ENCODE measurements at regions of chr13 and their contacts with region 1.

Region 1: GRCh38 chr13:28819735-28820098 is 422 bp upstream of the MTUS2 start:
- DNase-seq: no peak
- H3K4me3 ChIP-seq: peak overlapping the region; percentile 57 to 70 (median 62)
- H3K27ac ChIP-seq: peak overlapping the region in 2 of 4 donors; percentile 34 to 51
- H3K4me1 ChIP-seq: peaks cover 5 to 20% (median 17%) of the 10 kb centered on the region in 4 donors
- H3K27me3 ChIP-seq: peaks cover 0 to 46% (median 0%) of the 10 kb centered on the region in 4 donors
- CTCF ChIP-seq: peak; percentile 28 to 57 (median 56)
- EP300 ChIP-seq: no peak
- POLR2A ChIP-seq: no peak

Region 2: GRCh38 chr13:29000826-29001225 is 181.1 kb after region 1 on chr13:
- intact Hi-C with region 1: no loop called
- DNase-seq: no peak
- H3K4me3 ChIP-seq: no peak overlapping the region
- H3K27ac ChIP-seq: no peak overlapping the region
- H3K4me1 ChIP-seq: peaks cover 0 to under 1% (median 0%) of the 10 kb centered on the region in 4 donors
- H3K27me3 ChIP-seq: no peaks in the 10 kb centered on the region
- CTCF ChIP-seq: no peak
- EP300 ChIP-seq: no peak
- POLR2A ChIP-seq: no peak

Region 3: DNA sequence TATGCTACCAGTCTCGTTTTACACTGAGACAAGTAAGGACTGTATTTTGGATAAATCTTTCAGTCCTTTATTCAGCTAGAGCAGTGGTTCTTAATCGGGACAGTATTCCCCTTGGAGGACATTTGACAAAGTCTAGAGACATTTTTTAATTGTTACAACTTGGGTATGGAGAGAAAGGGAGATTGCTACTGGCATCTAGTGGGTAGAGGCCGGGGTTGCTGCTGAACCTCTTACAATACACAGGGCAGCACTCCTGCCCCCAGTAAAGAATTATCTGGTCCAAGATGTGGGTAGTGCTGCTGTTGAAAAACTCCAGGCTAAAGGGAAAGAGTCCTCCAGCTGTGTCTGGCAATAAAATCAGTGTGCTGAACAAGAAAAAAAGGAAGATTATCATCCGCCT is 441.0 kb after region 1 on chr13:
- intact Hi-C with region 1: loop called (anchors 2 kb)
- DNase-seq: no peak
- H3K4me3 ChIP-seq: no peak overlapping the region
- H3K27ac ChIP-seq: no peak overlapping the region
- H3K4me1 ChIP-seq: peaks cover 6 to 12% (median 10%) of the 10 kb centered on the region in 4 donors
- H3K27me3 ChIP-seq: no peaks in the 10 kb centered on the region
- CTCF ChIP-seq: peak in 2 of 3 experiments; percentile 64 to 66
- EP300 ChIP-seq: no peak
- POLR2A ChIP-seq: no peak

Region 4: DNA sequence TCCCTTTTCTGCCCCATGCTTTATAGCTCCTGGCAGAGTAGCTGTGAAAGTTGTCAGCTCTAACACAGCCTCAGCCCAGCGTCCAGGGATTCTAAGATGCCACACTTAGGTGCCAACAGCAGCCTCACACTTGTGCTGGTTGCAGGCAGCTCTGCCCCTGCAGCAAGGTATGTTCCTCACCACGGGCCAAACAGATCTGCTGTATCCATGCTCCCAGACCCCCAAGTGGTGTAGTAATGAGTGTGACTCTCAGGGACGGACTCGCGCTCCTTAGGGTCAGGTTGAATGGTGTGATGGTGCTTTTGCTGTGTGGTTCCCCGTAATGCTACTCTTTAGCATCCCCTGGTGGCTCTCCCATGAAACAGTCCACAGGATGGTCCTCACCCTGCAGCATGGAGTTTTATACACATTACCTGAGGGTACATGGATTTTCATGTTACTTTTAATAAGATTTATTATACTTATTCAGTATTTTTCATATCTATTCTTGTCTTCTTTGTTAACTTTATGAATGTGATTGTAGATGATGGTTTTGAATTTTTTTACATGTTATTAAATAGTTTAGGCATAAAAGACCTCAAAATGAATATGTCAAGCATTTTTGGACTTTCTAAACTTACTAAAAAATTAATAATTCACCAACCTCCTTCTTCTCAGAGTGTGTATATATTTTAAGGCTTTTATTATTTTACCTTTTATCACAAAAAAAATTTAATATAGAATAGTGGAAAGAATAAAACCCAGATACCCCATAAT is 543.3 kb after region 1 on chr13:
- intact Hi-C with region 1: loop called (anchors 2 kb)
- DNase-seq: peak; percentile 75
- H3K4me3 ChIP-seq: peak overlapping the region in 1 of 4 donors; percentile 23
- H3K27ac ChIP-seq: no peak overlapping the region
- H3K4me1 ChIP-seq: peaks cover 3 to 4% (median 3%) of the 10 kb centered on the region in 4 donors
- H3K27me3 ChIP-seq: no peaks in the 10 kb centered on the region
- CTCF ChIP-seq: peak; percentile 81 to 92 (median 85)
- EP300 ChIP-seq: no peak
- POLR2A ChIP-seq: no peak

Measured in esophagus muscularis mucosa (tissue), 4 donors.